ENCODE measurements at regions of chr18 and their contacts with region 1.

Region 1: GRCh38 chr18:56738184-56738583 is 87.0 kb downstream of the WDR7 start:
- DNase-seq: no peak
- ATAC-seq: no peak
- H3K4me3 ChIP-seq: no peak overlapping the region
- H3K4me3 Mint-ChIP-seq: no peak overlapping the region
- H3K27ac ChIP-seq: no peak overlapping the region
- H3K27ac Mint-ChIP-seq: no peak overlapping the region
- H3K4me1 ChIP-seq: no peaks in the 10 kb centered on the region
- H3K4me1 Mint-ChIP-seq: peaks cover 0 to 8% (median 0%) of the 10 kb centered on the region in 3 donors
- H3K27me3 ChIP-seq: no peaks in the 10 kb centered on the region
- H3K27me3 Mint-ChIP-seq: no peaks in the 10 kb centered on the region

Region 2: GRCh38 chr18:56716692-56717146 is 21.5 kb before region 1 on chr18:
- CTCF ChIA-PET with region 1: no interaction called
- POLR2A ChIA-PET with region 1: interaction called in 1 of 2 experiments, 13 read pairs
- DNase-seq: no peak
- ATAC-seq: no peak
- H3K4me3 ChIP-seq: no peak overlapping the region
- H3K4me3 Mint-ChIP-seq: no peak overlapping the region
- H3K27ac ChIP-seq: no peak overlapping the region
- H3K27ac Mint-ChIP-seq: no peak overlapping the region
- H3K4me1 ChIP-seq: no peaks in the 10 kb centered on the region
- H3K4me1 Mint-ChIP-seq: peaks cover 4 to 9% (median 4%) of the 10 kb centered on the region in 3 donors
- H3K27me3 ChIP-seq: no peaks in the 10 kb centered on the region
- H3K27me3 Mint-ChIP-seq: no peaks in the 10 kb centered on the region

Region 3: DNA sequence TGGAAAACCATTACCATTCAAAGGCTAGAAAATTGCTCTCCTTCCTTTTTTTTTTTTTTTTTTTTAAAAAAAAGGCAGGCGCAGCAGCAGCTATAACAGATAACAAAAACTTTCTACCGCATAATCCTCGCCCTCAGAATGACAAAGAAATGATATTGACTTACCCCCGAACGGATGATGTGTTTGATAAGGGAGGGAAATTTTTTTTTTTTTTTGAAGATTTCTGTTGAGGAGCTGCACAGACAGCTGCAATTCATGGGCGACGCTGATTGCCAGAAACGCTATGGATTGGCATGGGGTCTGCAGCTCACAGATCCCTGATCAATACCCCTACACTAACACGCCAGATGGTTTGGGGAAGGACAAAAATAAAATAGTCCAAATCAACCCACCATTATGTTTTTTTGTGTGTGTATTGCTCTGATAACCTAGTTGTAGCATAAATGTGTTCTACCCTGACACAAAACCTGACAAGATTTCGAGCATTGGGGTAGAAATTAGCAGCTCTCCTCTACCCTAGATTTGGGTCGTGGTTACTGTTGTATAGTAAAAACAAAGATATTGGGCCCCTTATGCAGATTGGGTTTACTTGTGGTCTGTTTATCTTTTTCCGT is 693.4 kb after region 1 on chr18:
- CTCF ChIA-PET with region 1: no interaction called
- POLR2A ChIA-PET with region 1: interaction called in 1 of 2 experiments, 15 read pairs
- DNase-seq: no peak
- ATAC-seq: no peak
- H3K4me3 ChIP-seq: no peak overlapping the region
- H3K4me3 Mint-ChIP-seq: no peak overlapping the region
- H3K27ac ChIP-seq: no peak overlapping the region
- H3K27ac Mint-ChIP-seq: no peak overlapping the region
- H3K4me1 ChIP-seq: peaks cover 9 to 38% of the 10 kb centered on the region in 2 experiments
- H3K4me1 Mint-ChIP-seq: peaks cover 25 to 37% (median 34%) of the 10 kb centered on the region in 3 donors
- H3K27me3 ChIP-seq: peaks cover 33 to 66% of the 10 kb centered on the region in 2 experiments
- H3K27me3 Mint-ChIP-seq: peaks cover 60 to 80% of the 10 kb centered on the region in 2 donors

Region 4: GRCh38 chr18:57644540-57644939 is 906.4 kb after region 1 on chr18:
- CTCF ChIA-PET with region 1: interaction called in 1 of 2 experiments, 11 read pairs
- POLR2A ChIA-PET with region 1: no interaction called
- DNase-seq: no peak
- ATAC-seq: no peak
- H3K4me3 ChIP-seq: no peak overlapping the region
- H3K4me3 Mint-ChIP-seq: no peak overlapping the region
- H3K27ac ChIP-seq: no peak overlapping the region
- H3K27ac Mint-ChIP-seq: no peak overlapping the region
- H3K4me1 ChIP-seq: peaks cover 0 to 2% of the 10 kb centered on the region in 2 experiments
- H3K4me1 Mint-ChIP-seq: peaks cover 26 to 29% (median 28%) of the 10 kb centered on the region in 3 donors
- H3K27me3 ChIP-seq: no peaks in the 10 kb centered on the region
- H3K27me3 Mint-ChIP-seq: no peaks in the 10 kb centered on the region

Measured in T-cell (primary cell).